Cardiac septum (tissue), 1 donor: ENCODE measurements at regions of chr18 and their contacts with region 1.

Region 1: DNA sequence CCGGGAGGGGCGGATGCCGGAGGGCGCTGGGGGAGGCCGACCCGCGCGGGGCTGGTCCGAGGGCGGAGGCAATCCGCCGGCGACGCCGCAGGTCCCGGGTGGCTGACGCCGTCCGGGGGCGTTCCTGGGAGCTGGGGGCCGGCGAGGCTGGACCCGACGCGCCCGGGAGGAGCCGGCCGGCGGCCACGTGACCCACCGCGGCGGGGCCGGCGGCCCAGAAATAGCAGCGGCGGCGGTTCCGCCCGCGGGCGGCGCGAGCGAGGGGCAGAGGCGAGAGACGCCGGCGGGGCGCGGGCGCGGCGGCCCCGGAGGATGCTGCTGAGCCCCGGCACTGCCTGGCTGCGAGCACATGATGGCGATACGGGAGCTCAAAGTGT is at the start of gene RAB31:
- DNase-seq: peak; percentile 90
- total RNA-seq, gene RAB31: 32.2 TPM

Region 2: GRCh38 chr18:9575558-9575957 is 132.5 kb before region 1 on chr18:
- intact Hi-C with region 1: no loop called
- DNase-seq: no peak

Region 3: GRCh38 chr18:9683407-9684396 is 24.3 kb before region 1 on chr18:
- intact Hi-C with region 1: loop called (anchors 1 kb)
- DNase-seq: no peak

Region 4: DNA sequence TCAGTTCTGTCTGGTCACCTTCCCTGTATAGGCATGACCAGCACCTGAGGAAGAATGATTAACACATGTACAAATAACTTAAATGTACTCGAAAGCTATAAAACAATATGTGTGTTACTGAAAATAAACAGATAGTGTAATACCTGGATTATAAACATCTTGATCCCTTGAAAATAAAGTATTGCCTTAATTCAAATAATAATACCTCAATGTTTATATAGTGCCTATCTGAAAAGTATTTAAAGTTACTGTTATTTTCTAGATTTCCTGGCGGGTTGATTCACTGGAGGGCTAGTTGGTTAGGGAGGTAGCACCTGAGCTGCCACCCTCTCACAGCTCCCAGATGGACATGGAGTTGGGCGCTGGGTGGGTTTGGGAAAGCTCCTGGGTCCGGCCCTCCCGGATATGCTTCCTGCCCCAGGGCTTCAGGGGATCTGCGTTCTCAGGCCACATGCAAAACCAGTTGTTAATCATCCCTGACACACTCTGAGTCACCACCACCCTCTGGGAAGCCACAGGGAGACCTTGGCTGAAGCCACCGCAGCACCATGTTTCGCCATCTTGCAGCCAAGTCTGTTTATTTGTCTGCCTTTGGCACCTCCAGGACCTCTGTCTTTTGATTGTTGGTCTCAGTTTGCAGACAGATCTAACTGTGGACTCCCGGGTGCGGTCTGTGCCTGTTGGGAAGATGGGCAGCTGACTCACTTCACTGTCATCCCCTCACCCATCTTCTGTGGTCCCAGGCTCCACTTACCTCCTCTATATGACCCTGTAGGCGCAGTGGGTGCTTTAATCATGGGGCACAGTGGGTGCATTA is 35.4 kb after region 1 on chr18:
- intact Hi-C with region 1: no loop called
- DNase-seq: no peak

Region 5: DNA sequence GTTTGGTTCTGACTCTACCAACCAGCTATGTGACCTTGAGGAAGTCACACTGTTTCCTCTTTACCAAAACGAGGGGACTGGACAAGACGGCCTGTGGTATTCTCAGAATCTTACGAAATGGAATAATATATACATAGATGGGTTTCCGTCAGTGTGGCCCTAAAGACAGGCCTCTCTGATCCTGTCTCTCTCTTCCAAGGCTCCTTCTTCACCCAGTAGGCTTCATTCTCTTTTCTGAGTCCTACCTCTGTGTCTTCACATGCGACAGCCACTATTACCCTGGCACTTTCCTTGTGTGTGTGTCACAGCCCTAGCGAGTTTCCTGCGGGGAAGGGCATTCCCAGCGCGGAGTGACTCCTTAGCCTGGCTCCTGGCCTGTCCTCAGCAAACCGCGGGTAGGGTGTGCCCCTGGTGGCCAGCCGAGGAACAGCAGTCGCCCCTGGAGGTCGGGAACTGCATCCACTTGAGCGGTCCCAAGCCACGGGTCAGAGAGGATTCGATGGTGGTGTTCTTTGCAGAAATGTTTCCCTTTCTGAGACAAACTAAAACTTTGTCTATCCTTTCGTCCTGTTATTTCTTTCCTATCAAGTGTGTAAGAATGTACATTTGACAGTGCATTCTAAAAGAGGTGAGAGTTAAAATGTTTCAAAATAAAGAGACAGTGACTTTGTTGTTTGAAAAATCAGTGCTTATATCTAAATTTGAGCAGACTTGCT is 63.4 kb after region 1 on chr18:
- intact Hi-C with region 1: loop called (anchors 5 kb)
- DNase-seq: peak; percentile 93

Region 6: GRCh38 chr18:9913526-9914333 is 205.7 kb after region 1 on chr18 and contains the start of gene VAPA:
- intact Hi-C with region 1: loop called (anchors 2 kb)
- DNase-seq: peak; percentile 98
- total RNA-seq, gene VAPA: 232 TPM

Region 7: DNA sequence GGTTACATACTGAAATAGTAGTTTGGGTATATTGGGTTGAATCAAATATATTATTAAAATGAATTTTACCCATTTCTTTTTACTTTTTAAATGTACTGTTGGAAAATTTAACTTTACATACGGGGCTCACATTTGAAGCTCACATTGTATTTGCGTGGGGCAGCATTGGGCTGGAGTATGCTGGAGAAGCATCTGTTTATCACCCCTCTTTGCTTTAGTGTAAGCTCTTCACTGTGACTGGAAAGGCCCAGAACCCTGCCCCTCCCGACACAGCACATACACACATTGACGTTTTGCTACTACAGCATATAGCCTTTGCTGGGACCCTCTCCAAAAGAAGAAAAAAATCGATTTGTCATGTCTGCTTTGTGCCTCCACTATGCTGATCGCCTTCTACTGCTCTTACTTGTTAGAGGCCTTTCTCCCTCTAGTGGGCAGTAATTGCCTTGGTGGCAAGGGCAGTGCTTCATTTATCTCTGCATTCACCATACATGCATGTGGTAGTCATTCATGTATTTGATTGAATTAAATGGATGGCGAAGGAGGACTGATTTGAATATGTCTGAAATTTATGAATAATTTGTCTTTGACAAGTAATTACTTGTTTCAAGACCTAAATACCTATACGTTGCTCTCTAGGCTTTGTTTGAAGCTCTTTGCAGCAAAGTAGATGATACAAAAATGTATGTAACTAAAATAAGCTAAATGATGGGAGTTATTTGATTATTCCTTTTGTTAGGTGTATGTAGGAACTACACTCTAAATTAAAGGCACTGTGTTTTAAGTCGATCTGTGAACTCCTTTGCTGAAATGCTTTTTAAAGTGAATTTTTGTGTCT is 243.2 kb after region 1 on chr18:
- intact Hi-C with region 1: loop called (anchors 10 kb)
- DNase-seq: no peak